AG04449 (cell line): ENCODE measurements at regions of chr18 and their contacts with region 1.

Region 1: DNA sequence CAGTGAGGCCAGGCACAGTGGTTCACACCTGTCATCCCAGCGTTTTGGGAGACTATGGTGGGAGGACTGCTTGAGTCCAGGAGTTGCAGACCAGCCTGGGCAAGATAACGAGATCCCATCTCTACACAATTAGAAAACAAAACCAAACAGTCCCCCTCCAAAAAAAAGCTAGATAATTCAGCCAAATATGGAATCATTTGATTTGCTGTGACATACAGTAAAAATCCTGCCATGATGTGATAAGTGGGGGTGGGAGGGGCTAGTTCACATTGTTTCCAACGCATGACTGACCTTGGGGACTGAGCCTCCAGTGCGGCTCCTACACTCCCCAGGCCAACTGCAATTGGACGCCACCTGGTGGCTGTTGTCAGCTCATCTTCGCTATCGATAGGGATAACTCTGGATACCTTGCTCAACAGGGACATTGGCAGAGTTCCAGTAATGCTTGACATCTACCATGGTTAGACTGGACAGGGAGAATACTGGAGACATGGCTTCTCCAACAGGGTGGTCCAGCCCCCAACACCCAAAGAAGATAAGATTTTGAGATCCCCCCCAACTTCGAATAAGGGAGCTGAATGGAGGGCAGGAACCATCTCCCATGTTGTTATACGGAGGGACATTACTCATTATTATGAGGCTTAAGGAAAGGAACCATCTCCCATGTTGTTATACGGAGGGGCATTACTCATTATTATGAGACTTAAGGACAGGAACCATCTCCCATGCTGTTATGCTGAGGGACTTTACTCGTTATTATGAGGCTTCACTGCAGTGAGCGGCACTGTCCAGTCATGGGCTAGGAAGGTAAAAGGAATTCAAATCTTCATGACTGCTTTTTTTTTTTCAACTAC is 135.9 kb downstream of the TGIF1 start:
- DNase-seq: no peak
- H3K4me3 ChIP-seq: no peak overlapping the region
- CTCF ChIP-seq: peak; percentile 80

Region 2: GRCh38 chr18:3281456-3282400 is 304.2 kb before region 1 on chr18:
- CTCF ChIA-PET with region 1: interaction called, 44 read pairs
- POLR2A ChIA-PET with region 1: no interaction called
- DNase-seq: no peak
- H3K4me3 ChIP-seq: no peak overlapping the region
- CTCF ChIP-seq: peak; percentile 31

Region 3: GRCh38 chr18:3454365-3455089 is 131.4 kb before region 1 on chr18:
- CTCF ChIA-PET with region 1: interaction called, 78 read pairs
- POLR2A ChIA-PET with region 1: interaction called, 4 read pairs
- DNase-seq: no peak
- H3K4me3 ChIP-seq: peak overlapping the region; percentile 81
- CTCF ChIP-seq: peak; percentile 49

Region 4: GRCh38 chr18:3481696-3482210 is 104.1 kb before region 1 on chr18:
- CTCF ChIA-PET with region 1: interaction called, 10 read pairs
- POLR2A ChIA-PET with region 1: no interaction called
- DNase-seq: no peak
- H3K4me3 ChIP-seq: no peak overlapping the region
- CTCF ChIP-seq: peak; percentile 45

Region 5: DNA sequence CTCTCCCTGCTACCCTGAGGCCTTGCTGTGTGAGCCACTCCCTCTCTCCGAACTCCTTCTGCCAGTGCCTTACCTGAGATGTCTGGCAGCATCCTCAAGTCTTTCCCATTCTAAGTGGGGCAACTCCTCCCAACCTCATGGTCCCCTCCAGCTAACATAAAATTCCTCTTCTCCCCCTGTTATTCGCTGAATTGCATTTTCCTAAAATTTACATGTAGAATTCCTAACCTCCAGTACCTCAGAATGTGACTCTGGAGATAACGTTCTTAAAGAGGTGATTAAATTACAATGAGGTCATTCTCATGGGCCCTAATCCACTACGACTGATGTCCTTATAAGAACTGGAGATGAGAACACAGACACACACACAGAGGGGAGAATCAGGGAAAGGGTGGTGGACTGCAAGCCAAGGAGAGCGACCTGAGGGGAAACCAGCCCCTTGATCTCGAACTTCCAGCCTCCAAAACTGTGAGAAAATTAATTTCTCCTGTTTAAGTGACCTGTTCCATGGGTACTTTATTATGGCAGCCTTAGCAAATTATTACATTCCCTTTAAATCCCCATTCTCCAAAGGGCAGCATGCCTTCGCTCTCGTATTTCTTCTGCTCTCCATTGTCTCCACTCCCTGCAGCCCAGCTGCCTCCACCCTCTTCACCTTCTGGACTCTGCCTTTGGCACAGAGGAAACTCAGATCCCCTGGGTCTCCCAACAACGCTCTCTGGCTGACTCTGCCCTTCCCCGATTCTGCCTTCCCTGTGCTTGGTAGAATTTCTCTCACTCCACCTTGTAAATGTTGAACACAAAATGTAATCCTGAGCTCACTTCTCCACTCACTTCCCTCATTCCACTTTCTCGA is 65.4 kb before region 1 on chr18:
- CTCF ChIA-PET with region 1: interaction called, 10 read pairs
- POLR2A ChIA-PET with region 1: no interaction called
- DNase-seq: no peak
- H3K4me3 ChIP-seq: no peak overlapping the region
- CTCF ChIP-seq: no peak